ENCODE measurements at regions of chr7 and their contacts with region 1.

Region 1: DNA sequence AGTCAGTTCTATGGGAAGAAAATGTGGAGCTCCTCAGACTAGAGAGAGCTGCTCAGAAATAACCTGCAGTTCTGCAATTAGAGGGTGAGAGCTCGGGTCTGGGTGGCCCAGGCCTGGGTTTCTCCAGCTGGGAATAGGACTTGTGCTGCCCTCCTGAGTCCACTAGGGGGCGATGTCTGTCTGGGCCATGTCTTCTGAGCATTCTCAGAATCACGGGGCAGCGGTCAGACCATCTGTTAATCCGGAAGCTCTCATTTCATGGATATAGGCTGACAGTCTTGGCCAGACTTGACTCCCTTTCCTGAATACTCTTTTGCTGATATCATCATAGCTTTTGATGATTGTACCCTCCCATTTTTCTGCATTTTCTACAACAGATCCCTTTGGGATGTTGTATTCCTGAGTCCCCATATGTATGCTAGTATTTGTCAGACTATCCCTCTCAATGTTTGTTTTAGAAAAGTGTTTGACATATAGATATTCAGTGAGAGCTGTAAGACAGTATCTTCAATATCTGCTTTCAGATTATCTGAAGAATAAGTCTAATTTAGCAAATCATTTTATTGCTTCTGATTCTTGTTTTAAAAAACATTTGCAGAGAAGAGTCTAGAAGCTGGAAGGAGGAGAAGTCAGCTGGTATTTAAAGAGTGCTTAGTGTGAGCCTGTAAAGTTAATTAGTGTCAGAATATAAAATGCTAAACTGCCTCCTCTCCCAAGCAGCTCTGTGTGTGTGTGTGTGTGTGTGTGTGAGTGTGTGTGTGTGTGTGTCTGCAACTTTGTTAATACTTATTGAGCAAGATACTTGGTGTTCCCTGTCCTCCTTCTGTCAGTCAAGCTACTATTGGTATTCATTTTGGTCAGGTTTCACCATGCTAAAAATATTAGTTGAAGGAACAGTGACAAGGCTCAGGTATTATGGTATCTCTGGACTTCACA is 38.0 kb downstream of the STARD3NL start:
- DNase-seq: peak; percentile 89
- ATAC-seq: peak; percentile 80
- H3K4me3 Mint-ChIP-seq: no peak overlapping the region
- H3K27ac Mint-ChIP-seq: peak overlapping the region; percentile 55
- H3K4me1 Mint-ChIP-seq: peaks cover 52% of the 10 kb centered on the region
- H3K27me3 Mint-ChIP-seq: no peaks in the 10 kb centered on the region

Region 2: GRCh38 chr7:38107486-38107893 is 108.5 kb before region 1 on chr7:
- CTCF ChIA-PET with region 1: interaction called, 109 read pairs
- POLR2A ChIA-PET with region 1: no interaction called
- DNase-seq: peak; percentile 78
- ATAC-seq: peak; percentile 88
- H3K4me3 Mint-ChIP-seq: no peak overlapping the region
- H3K27ac Mint-ChIP-seq: no peak overlapping the region
- H3K4me1 Mint-ChIP-seq: no peaks in the 10 kb centered on the region
- H3K27me3 Mint-ChIP-seq: peaks cover 27% of the 10 kb centered on the region

Region 3: DNA sequence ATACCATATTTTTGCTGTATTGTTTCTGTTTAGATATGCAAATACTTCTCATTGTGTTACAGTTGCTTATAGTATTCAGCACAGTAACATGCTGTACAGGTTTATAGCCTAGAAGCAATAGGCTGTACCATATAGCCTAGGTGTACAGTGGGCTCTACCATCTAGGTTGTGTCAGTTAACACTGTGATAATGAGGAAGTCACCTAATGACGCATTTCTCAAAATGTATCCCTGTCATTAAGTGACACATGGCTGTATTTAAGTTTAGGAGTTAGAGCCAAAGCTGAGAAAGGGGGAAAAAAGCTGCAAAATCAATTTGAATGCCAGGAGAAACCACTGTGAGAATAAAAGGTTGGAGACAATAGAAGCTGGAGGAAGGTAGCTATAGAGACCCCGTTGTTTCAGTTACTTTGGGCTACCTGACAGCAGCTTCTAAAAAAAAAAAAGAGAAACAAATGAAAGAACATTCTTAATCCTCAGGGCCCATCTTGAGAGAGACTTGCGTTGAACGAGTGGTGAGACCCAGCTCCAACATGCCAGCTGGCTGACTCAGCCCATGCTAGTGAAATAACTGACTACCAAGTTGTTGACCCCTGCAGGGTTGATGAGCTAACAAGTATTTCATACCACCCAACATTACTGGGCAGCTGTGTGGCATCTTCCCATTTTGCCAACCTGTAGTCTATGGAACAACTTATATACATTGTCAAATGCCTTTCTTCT is 29.2 kb before region 1 on chr7:
- CTCF ChIA-PET with region 1: interaction called, 62 read pairs
- POLR2A ChIA-PET with region 1: no interaction called
- DNase-seq: no peak
- ATAC-seq: no peak
- H3K4me3 Mint-ChIP-seq: no peak overlapping the region
- H3K27ac Mint-ChIP-seq: no peak overlapping the region
- H3K4me1 Mint-ChIP-seq: peaks cover 5% of the 10 kb centered on the region
- H3K27me3 Mint-ChIP-seq: no peaks in the 10 kb centered on the region

Region 4: GRCh38 chr7:38232502-38233366 is 16.7 kb after region 1 on chr7:
- CTCF ChIA-PET with region 1: interaction called, 137 read pairs
- POLR2A ChIA-PET with region 1: interaction called, 3 read pairs
- DNase-seq: peak; percentile 90
- ATAC-seq: peak; percentile 89
- H3K4me3 Mint-ChIP-seq: peak overlapping the region; percentile 62
- H3K27ac Mint-ChIP-seq: peak overlapping the region; percentile 95
- H3K4me1 Mint-ChIP-seq: peaks cover 94% of the 10 kb centered on the region
- H3K27me3 Mint-ChIP-seq: no peaks in the 10 kb centered on the region

Region 5: GRCh38 chr7:38312821-38313220 is 96.8 kb after region 1 on chr7:
- CTCF ChIA-PET with region 1: interaction called, 116 read pairs
- POLR2A ChIA-PET with region 1: no interaction called
- DNase-seq: no peak
- ATAC-seq: no peak
- H3K4me3 Mint-ChIP-seq: peak overlapping the region; percentile 53
- H3K27ac Mint-ChIP-seq: peak overlapping the region; percentile 63
- H3K4me1 Mint-ChIP-seq: peaks cover 56% of the 10 kb centered on the region
- H3K27me3 Mint-ChIP-seq: no peaks in the 10 kb centered on the region

Region 6: DNA sequence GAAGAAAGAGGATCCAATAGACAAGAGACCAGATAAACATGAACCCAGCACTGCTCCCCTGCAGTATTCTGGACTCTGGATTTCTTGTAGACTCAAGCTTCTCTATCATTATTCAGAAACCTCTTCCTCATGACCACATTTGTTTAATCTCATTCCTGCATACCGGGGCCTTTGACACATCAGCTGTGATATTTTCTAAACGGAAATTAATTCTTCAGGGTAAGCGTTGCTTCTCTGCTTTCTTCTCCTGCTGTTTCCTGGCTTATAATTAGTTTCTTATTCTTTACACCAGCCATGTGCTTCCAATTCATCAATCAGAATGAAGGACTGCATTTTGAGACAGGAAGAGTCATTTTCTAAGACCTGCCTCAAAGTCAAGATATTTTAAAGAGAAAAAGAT is 111.6 kb after region 1 on chr7:
- CTCF ChIA-PET with region 1: interaction called, 95 read pairs
- POLR2A ChIA-PET with region 1: interaction called, 9 read pairs
- DNase-seq: no peak
- ATAC-seq: no peak
- H3K4me3 Mint-ChIP-seq: no peak overlapping the region
- H3K27ac Mint-ChIP-seq: no peak overlapping the region
- H3K4me1 Mint-ChIP-seq: peaks cover 48% of the 10 kb centered on the region
- H3K27me3 Mint-ChIP-seq: no peaks in the 10 kb centered on the region

Region 7: DNA sequence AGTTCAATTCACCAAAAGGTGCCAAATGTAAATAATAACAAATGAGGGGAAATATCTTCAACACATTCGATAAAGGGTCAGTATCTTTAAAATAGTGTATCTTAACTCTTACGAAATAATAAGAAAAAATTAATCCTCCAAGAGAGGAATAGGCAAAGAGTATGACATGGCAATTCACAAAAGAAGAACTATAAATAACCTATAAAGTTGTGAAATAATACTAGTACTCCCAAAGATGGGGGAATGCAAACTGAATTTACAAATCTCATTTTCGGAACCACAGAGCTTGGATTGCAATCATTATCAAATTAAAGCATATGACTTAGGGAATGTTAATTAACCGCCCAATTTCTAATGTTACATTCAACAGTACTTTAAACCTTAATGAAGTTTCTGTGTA is 135.6 kb after region 1 on chr7:
- CTCF ChIA-PET with region 1: interaction called, 47 read pairs
- POLR2A ChIA-PET with region 1: interaction called, 3 read pairs
- DNase-seq: no peak
- ATAC-seq: no peak
- H3K4me3 Mint-ChIP-seq: peak overlapping the region; percentile 87
- H3K27ac Mint-ChIP-seq: peak overlapping the region; percentile 92
- H3K4me1 Mint-ChIP-seq: peaks cover 50% of the 10 kb centered on the region
- H3K27me3 Mint-ChIP-seq: no peaks in the 10 kb centered on the region

Measured in activated CD8-positive, alpha-beta T cell treated with anti-CD3 and anti-CD28 coated beads, Interleukin-2, amount 10 ng/mL, durations not matched to agents 7 days and 5 days (primary cell).